Calu3 (cell line): ENCODE measurements at regions of chr6 and their contacts with region 1.

Region 1: DNA sequence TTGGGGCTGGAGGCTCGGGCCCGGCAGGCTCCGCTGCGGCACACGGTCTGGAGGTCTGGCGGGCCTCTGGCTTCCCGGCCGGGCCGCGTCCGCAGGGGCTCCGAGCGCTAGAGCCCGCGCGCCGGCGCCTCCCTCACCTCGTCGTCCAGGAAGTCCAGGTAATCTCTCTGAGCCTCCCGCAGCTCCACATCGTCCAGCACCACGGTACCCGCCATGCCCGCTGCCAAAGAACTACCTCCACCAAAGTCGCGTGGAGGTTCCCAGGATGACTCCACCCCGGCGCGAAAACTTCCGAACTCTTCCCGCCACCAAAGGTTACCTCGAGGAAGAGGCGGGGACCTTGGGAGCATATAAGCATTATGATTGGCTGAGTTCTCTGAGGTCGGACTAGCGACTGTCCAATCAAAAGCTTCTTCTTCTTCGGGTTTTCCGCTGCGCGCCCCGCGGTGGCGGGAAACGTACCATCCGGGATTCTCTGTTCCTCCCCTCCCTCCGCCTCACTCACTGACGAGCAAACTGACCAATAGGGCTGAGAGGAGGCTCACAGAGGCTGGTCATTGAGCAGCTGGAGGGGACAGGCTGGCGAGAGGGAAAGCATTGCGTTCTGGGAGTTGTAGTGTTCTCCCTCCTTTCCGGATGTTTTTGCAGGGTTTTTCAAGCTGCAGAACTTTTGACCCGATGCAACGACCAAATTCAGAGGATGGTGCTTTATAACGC is at the start of gene MCM3:
- DNase-seq: peak; percentile 97
- H3K4me3 Mint-ChIP-seq: no peak within 1 kb of the TSS
- H3K27ac Mint-ChIP-seq: no peak within 1 kb of the TSS
- H3K4me1 Mint-ChIP-seq: peaks cover 34% of the 10 kb centered on the region
- H3K27me3 Mint-ChIP-seq: no peaks in the 10 kb centered on the region
- CTCF ChIP-seq: no peak
- total RNA-seq, gene MCM3: 116 and 117 TPM in 2 replicates

Region 2: GRCh38 chr6:51152594-51152993 is 1132.0 kb before region 1 on chr6:
- CTCF ChIA-PET with region 1: no interaction called
- intact Hi-C with region 1: no loop called
- DNase-seq: no peak
- H3K4me3 Mint-ChIP-seq: no peak overlapping the region
- H3K27ac Mint-ChIP-seq: no peak overlapping the region
- H3K4me1 Mint-ChIP-seq: no peaks in the 10 kb centered on the region
- H3K27me3 Mint-ChIP-seq: no peaks in the 10 kb centered on the region
- CTCF ChIP-seq: no peak

Region 3: GRCh38 chr6:52297433-52297832 is 12.8 kb after region 1 on chr6:
- CTCF ChIA-PET with region 1: no interaction called
- intact Hi-C with region 1: no loop called
- DNase-seq: no peak
- H3K4me3 Mint-ChIP-seq: no peak overlapping the region
- H3K27ac Mint-ChIP-seq: no peak overlapping the region
- H3K4me1 Mint-ChIP-seq: peaks cover 23% of the 10 kb centered on the region
- H3K27me3 Mint-ChIP-seq: no peaks in the 10 kb centered on the region
- CTCF ChIP-seq: no peak

Region 4: GRCh38 chr6:52361945-52362442 is 77.4 kb after region 1 on chr6 and contains the start of gene PAQR8:
- CTCF ChIA-PET with region 1: interaction called, 4 read pairs
- intact Hi-C with region 1: loop called (anchors 2 kb)
- DNase-seq: peak; percentile 79
- H3K4me3 Mint-ChIP-seq: peak within 1 kb of the TSS; percentile 100
- H3K27ac Mint-ChIP-seq: peak within 1 kb of the TSS; percentile 95
- H3K4me1 Mint-ChIP-seq: peaks cover 34% of the 10 kb centered on the region
- H3K27me3 Mint-ChIP-seq: no peaks in the 10 kb centered on the region
- CTCF ChIP-seq: no peak
- total RNA-seq, gene PAQR8: 16.1 and 16.3 TPM in 2 replicates

Region 5: GRCh38 chr6:52389626-52390360 is 105.2 kb after region 1 on chr6:
- CTCF ChIA-PET with region 1: no interaction called
- intact Hi-C with region 1: loop called (anchors 2 kb)
- DNase-seq: peak; percentile 84
- H3K4me3 Mint-ChIP-seq: peak overlapping the region; percentile 61
- H3K27ac Mint-ChIP-seq: peak overlapping the region; percentile 93
- H3K4me1 Mint-ChIP-seq: peaks cover 42% of the 10 kb centered on the region
- H3K27me3 Mint-ChIP-seq: no peaks in the 10 kb centered on the region
- CTCF ChIP-seq: no peak

Region 6: DNA sequence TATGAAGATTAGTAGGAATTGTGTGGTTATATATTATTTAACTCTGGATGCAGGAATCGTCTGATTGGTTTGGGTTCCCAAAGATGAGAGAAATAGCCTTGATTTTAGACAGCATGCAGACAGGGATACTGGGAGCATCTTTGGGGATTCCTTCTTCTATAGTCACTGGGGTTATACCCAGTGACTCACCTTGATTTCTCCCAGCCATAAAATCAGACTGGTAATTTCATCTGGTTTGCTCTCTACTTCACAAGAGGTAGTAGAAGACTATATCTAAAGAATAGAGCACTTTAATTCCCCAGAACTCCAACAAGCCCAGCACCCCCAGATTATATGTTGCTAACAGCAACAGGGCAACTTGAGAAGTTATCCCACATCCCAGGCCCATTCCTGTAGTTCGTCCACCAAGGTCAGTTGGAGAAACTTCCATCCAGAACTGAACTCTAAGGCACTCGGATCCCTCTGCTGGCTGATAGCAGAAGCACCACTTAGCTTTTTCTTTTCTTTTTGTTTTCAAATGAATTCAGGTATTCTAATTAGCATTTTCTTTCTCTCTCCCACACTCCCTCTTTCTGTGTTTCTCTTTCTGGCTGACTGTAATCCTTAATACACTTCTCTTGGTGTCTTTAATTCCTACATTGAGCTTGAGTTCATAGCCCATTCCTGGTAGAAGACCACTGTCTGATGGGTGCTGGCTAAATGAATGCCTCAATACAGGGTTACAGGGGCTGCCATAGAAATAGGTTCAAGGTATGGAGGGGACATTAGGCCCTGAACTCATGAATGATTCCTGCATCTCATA is 115.1 kb after region 1 on chr6:
- CTCF ChIA-PET with region 1: interaction called, 12 read pairs
- intact Hi-C with region 1: loop called (anchors 1 kb)
- DNase-seq: peak; percentile 45
- H3K4me3 Mint-ChIP-seq: no peak overlapping the region
- H3K27ac Mint-ChIP-seq: no peak overlapping the region
- H3K4me1 Mint-ChIP-seq: peaks cover 36% of the 10 kb centered on the region
- H3K27me3 Mint-ChIP-seq: no peaks in the 10 kb centered on the region
- CTCF ChIP-seq: peak; percentile 71